Esophagus muscularis mucosa (tissue), 4 donors: ENCODE measurements at regions of chr3 and their contacts with region 1.

Region 1: GRCh38 chr3:71652781-71653413 is 69.4 kb upstream of the FOXP1 start:
- DNase-seq: no peak
- H3K4me3 ChIP-seq: peak overlapping the region in 3 of 4 donors; percentile 4 to 38 (median 19)
- H3K27ac ChIP-seq: peak overlapping the region; percentile 45 to 60 (median 55)
- H3K4me1 ChIP-seq: peaks cover 8 to 41% (median 37%) of the 10 kb centered on the region in 4 donors
- H3K27me3 ChIP-seq: no peaks in the 10 kb centered on the region
- CTCF ChIP-seq: peak; percentile 57 to 71 (median 65)
- EP300 ChIP-seq: no peak
- POLR2A ChIP-seq: no peak

Region 2: DNA sequence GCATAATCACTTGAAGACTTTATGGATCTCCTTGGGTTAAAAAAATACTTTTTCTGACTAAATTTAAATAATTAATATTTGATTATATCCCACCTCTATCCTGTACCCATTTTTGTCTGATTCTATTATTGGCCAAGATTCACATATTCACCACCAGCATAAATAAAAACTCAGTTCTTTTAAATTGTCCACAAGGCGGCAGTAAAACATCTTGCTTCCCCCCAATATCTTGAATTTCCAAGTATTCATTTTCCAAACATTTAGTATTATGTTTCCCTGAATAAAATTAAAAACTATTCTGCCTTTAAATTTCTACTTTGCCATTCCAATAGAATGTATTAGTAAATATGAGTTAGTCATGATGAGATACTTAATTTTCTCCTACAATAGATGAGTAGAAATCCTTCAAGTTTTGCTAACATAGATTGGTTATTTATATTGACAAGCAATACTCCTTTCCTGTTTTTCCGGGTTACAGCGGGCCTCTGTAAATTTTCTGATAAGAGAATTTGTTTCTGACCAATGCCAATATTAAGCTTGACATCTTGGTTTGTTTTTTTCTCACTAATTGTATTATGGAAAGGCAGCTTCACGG is 1121.7 kb before region 1 on chr3:
- intact Hi-C with region 1: loop called (anchors 10 kb)
- DNase-seq: no peak
- H3K4me3 ChIP-seq: no peak overlapping the region
- H3K27ac ChIP-seq: peak overlapping the region in 3 of 4 donors; percentile 5 to 55 (median 22)
- H3K4me1 ChIP-seq: peaks cover 0 to 36% (median 29%) of the 10 kb centered on the region in 4 donors
- H3K27me3 ChIP-seq: no peaks in the 10 kb centered on the region
- CTCF ChIP-seq: peak; percentile 62 to 67 (median 63)
- EP300 ChIP-seq: no peak
- POLR2A ChIP-seq: no peak

Region 3: DNA sequence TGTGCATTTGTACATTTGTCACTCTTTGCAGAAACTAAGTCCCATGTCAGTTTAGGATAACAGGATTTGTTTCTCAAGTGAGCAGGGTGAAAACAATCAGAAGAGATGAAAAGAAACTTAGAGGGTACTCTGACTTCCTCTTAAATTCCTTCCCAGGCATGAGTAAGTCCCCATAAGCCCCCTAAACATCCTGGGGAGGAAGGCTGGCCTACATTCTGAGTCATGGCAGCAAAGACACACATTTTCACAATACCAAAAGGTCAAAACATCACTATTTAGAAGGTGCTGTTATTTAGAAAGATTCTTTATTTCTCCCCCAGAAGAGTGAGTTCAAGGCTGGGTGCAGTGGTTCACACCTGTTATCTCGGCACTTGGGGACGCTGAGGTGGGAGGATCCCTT is 61.8 kb before region 1 on chr3:
- intact Hi-C with region 1: loop called (anchors 5 kb)
- DNase-seq: no peak
- H3K4me3 ChIP-seq: no peak overlapping the region
- H3K27ac ChIP-seq: no peak overlapping the region
- H3K4me1 ChIP-seq: peaks cover 0 to 26% (median 22%) of the 10 kb centered on the region in 4 donors
- H3K27me3 ChIP-seq: no peaks in the 10 kb centered on the region
- CTCF ChIP-seq: no peak
- EP300 ChIP-seq: no peak
- POLR2A ChIP-seq: no peak

Region 4: DNA sequence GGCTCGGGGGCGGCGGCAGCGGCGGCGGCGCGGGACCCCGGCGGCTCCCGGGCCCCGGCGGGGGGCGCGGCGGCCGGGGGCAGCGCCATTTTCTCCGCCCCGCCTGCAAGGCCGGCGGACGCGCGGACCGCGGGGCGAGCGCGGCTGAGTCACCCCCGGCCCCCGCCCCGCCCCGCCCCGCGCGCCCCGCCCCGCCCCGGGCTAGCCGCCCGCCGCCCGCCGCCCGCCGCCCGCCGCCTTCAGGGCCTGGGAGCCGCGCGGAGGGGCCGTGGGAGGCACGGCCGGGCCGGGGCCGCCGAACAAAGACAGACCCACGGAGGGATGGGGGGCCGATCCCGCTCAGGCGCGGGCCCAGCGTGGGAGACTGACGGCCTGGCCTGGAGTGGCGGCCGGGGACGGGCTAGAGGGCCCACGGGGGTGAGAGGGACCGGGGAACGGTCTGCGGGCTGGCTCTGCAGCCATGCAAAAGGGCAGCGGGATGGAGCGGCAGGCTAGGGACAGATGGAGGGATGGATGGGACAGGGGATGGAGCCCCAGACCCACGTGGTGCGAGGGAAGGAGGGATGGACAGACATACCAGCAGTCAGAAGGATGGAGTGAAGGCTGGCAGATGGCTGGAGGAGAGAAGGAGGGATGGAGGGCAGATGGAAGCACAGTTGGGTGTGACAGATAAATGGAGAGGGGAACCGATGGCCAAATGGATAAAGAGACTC is 72.5 kb after region 1 on chr3 and contains the start of gene EIF4E3:
- intact Hi-C with region 1: no loop called
- DNase-seq: no peak
- H3K4me3 ChIP-seq: peak within 1 kb of the TSS; percentile 70 to 99 (median 86)
- H3K27ac ChIP-seq: peak within 1 kb of the TSS; percentile 80 to 84 (median 84)
- H3K4me1 ChIP-seq: peaks cover 19 to 41% (median 29%) of the 10 kb centered on the region in 4 donors
- H3K27me3 ChIP-seq: no peaks in the 10 kb centered on the region
- CTCF ChIP-seq: no peak
- EP300 ChIP-seq: no peak
- POLR2A ChIP-seq: no peak
- total RNA-seq, gene EIF4E3: 36.2 to 51.9 (median 39.4) TPM

Region 5: DNA sequence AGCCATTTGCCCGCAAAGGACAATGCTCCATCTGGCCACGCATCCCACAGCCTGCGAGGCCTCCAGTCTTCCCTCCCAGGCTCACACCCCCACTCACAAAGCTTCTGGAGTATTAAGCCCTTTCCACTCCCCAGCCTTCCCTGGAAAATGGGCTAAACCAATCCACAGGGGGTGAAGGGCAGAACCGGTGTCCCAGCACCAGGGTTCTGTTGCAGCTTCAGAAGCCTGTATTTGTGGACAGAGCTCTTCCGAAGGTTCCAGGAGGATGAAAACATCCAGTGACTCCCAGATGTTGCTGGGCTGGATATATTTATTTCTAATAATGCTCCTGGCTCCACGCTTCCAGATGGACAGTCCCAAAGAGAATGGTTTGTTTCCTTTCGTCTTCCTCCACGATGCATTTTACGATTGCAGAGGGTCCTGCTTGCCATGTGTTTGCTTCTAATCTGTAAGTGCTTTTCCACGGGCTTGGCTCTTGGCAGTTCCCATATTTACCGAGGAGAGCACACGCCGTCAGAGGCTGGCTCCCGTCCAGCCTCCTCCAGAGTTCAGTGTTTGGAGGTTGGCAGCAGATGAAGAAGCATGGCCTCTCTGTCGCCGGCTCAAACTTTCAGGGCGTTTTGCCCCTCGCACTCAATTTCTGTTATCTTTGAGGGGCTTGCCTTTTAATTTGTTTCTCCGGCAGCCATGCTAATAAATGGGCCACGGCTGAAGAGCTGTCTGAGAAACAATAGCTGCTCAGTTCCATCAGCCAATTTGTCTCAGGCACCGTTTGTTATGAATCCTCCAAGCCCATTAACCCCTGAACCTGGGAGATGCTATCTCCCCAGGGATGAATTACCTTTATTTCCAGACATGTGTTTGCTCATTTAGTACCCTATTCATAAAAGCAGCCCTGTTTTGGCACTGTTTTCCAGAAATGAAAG is 499.9 kb after region 1 on chr3:
- intact Hi-C with region 1: no loop called
- DNase-seq: no peak
- H3K4me3 ChIP-seq: peak overlapping the region; percentile 32 to 51 (median 43)
- H3K27ac ChIP-seq: peak overlapping the region; percentile 64 to 72 (median 66)
- H3K4me1 ChIP-seq: peaks cover 12 to 44% (median 36%) of the 10 kb centered on the region in 4 donors
- H3K27me3 ChIP-seq: no peaks in the 10 kb centered on the region
- CTCF ChIP-seq: no peak
- EP300 ChIP-seq: no peak
- POLR2A ChIP-seq: no peak